ENCODE measurements at regions of chr13 and their contacts with region 1.

Region 1: DNA sequence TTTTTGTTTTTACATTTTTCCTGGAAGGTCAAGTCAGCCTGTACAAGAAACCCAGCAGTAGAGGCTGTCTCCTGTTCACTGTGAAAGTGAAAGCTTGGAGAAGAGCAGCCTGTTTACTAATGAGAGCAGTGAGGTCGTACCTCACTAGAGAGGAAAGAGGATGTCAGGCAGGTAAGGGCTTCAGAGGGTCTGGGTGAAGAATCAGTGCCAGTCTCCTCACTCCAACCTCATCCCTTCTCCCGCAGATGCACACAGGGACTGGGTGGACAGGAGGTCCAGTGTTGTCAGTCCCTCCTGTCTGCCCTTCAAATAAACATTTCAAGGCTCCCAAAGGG is 462.5 kb downstream of the KLF5 start:
- DNase-seq: peak in 6 of 9 donors; percentile 35 to 57 (median 52)
- ATAC-seq: peak; percentile 79
- H3K4me3 ChIP-seq: peak overlapping the region; percentile 59
- H3K4me3 Mint-ChIP-seq: peak overlapping the region; percentile 82 to 93 (median 88)
- H3K27ac ChIP-seq: peak overlapping the region; percentile 71
- H3K27ac Mint-ChIP-seq: peak overlapping the region; percentile 89 to 99 (median 97)
- H3K4me1 ChIP-seq: peaks cover 0 to 13% of the 10 kb centered on the region in 2 donors
- H3K4me1 Mint-ChIP-seq: peaks cover 9 to 32% (median 25%) of the 10 kb centered on the region in 7 donors
- H3K27me3 ChIP-seq: no peaks in the 10 kb centered on the region
- H3K27me3 Mint-ChIP-seq: peaks cover 0 to 3% (median 0%) of the 10 kb centered on the region in 5 donors

Region 2: GRCh38 chr13:72808917-72809500 is 712.2 kb before region 1 on chr13:
- CTCF ChIA-PET with region 1: no interaction called
- POLR2A ChIA-PET with region 1: no interaction called
- intact Hi-C with region 1: loop called in 1 of 2 experiments (anchors 10 kb)
- DNase-seq: peak in 4 of 9 donors; percentile 7 to 22 (median 16)
- ATAC-seq: peak; percentile 51
- H3K4me3 ChIP-seq: no peak overlapping the region
- H3K4me3 Mint-ChIP-seq: no peak overlapping the region
- H3K27ac ChIP-seq: no peak overlapping the region
- H3K27ac Mint-ChIP-seq: peak overlapping the region in 3 of 9 donors; percentile 2 to 82 (median 76)
- H3K4me1 ChIP-seq: no peaks in the 10 kb centered on the region
- H3K4me1 Mint-ChIP-seq: peaks cover 0 to 8% (median 5%) of the 10 kb centered on the region in 7 donors
- H3K27me3 ChIP-seq: no peaks in the 10 kb centered on the region
- H3K27me3 Mint-ChIP-seq: no peaks in the 10 kb centered on the region

Region 3: GRCh38 chr13:73058736-73059459 is 462.4 kb before region 1 on chr13 and contains the start of gene KLF5:
- CTCF ChIA-PET with region 1: no interaction called
- POLR2A ChIA-PET with region 1: no interaction called
- intact Hi-C with region 1: loop called in 1 of 2 experiments (anchors 2 kb)
- DNase-seq: peak; percentile 93 to 98 (median 94)
- ATAC-seq: peak; percentile 98
- H3K4me3 ChIP-seq: peak within 1 kb of the TSS; percentile 58
- H3K4me3 Mint-ChIP-seq: peak within 1 kb of the TSS; percentile 82 to 94 (median 90)
- H3K27ac ChIP-seq: peak within 1 kb of the TSS; percentile 42
- H3K27ac Mint-ChIP-seq: peak within 1 kb of the TSS; percentile 38 to 92 (median 79)
- H3K4me1 ChIP-seq: peaks cover 4 to 10% of the 10 kb centered on the region in 2 donors
- H3K4me1 Mint-ChIP-seq: peaks cover 6 to 32% (median 23%) of the 10 kb centered on the region in 7 donors
- H3K27me3 ChIP-seq: peaks cover 5 to 10% of the 10 kb centered on the region in 2 donors
- H3K27me3 Mint-ChIP-seq: peaks cover 19 to 58% (median 40%) of the 10 kb centered on the region in 5 donors
- total RNA-seq, gene KLF5: 3.6 to 13.3 (median 5.7) TPM

Region 4: DNA sequence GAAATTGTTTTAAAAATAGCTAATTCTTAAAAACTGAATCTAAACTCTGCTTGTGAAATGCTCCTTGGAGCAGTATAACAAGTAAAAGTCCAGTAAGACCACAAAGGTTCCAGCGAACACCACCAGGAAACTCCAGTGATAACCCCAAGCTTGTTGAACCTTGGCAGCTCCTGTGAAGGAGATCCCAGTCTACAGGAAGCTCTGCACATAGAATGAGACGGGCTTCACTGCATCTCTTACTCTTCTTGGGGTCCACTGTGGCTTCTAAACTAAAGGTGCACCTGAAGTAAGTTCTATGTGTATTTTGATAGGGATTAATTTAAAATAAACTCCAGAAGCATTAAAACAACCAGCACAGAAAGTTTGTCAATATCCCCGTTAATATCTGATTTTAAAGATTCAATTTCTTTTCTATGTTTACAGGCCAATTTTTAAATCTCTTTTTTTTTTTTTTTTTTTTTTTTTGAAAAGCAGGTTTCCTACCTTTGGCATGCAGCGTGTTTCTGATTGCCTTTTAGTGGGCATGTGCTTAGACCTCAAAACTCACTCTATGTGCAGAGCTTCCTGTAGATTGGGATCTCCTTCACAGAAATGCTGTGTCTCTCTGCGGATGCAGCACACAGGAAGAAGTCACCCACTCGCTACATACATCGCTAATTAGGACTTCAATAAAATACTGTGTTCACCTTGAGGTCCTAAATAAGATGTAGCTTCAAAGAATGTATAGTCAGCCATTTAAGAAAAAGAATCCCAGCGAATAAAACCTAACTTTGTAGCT is 104.5 kb after region 1 on chr13:
- CTCF ChIA-PET with region 1: no interaction called
- POLR2A ChIA-PET with region 1: interaction called, 3 read pairs
- intact Hi-C with region 1: loop called (anchors 5 kb)
- DNase-seq: peak in 7 of 9 donors; percentile 31 to 80 (median 66)
- ATAC-seq: peak; percentile 90
- H3K4me3 ChIP-seq: no peak overlapping the region
- H3K4me3 Mint-ChIP-seq: peak overlapping the region; percentile 51 to 79 (median 74)
- H3K27ac ChIP-seq: no peak overlapping the region
- H3K27ac Mint-ChIP-seq: peak overlapping the region; percentile 62 to 91 (median 84)
- H3K4me1 ChIP-seq: peaks cover 13 to 32% of the 10 kb centered on the region in 2 donors
- H3K4me1 Mint-ChIP-seq: peaks cover 14 to 63% (median 54%) of the 10 kb centered on the region in 7 donors
- H3K27me3 ChIP-seq: no peaks in the 10 kb centered on the region
- H3K27me3 Mint-ChIP-seq: no peaks in the 10 kb centered on the region

Measured in naive thymus-derived CD4-positive, alpha-beta T cell (primary cell).